AG04449 (cell line): ENCODE measurements at regions of chr3 and their contacts with region 1.

Region 1: GRCh38 chr3:187738331-187739093 is 6.8 kb downstream of the BCL6 start:
- DNase-seq: no peak
- H3K4me3 ChIP-seq: peak overlapping the region; percentile 94
- CTCF ChIP-seq: peak; percentile 76

Region 2: DNA sequence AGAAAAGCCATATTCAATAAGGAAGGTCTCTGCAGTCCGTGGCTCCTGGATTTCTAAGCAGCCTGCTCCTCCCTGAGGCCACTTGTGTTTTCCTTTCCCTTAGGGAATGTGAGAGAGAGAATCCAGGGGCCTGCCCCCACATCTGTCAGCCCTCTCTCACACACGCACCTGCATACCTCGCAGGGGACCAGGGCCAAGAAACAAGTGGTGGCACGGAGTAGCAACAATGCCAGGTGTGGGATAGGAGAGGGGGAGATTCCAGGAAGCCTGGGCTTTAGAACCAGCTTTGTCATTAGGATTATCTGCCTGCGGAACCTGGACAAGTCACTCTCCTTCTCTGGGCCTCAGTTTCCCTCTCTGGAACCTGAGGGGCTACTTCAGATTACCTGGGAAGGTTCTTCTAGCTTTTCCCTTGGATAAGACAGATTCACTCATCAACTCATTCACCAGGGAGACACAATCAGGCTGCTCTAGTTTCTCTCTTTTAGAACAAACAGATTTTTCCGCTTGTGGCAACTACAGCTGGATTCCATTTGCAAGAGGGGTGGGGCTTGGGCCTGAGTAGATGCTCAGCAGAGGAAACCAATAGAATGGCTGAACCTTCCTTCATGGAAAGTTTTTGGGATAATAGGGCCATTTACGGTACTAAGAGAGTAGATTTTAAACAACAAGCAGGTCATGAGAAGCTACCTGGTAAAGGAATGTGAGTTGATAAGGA is 12.7 kb before region 1 on chr3:
- CTCF ChIA-PET with region 1: interaction called, 11 read pairs
- POLR2A ChIA-PET with region 1: interaction called, 3 read pairs
- DNase-seq: no peak
- H3K4me3 ChIP-seq: no peak overlapping the region
- CTCF ChIP-seq: no peak

Region 3: GRCh38 chr3:188220988-188221818 is 482.7 kb after region 1 on chr3:
- CTCF ChIA-PET with region 1: interaction called, 13 read pairs
- POLR2A ChIA-PET with region 1: interaction called, 4 read pairs
- DNase-seq: no peak
- H3K4me3 ChIP-seq: no peak overlapping the region
- CTCF ChIP-seq: no peak

Region 4: GRCh38 chr3:188294823-188295487 is 556.4 kb after region 1 on chr3:
- CTCF ChIA-PET with region 1: interaction called, 16 read pairs
- POLR2A ChIA-PET with region 1: no interaction called
- DNase-seq: peak; percentile 92
- H3K4me3 ChIP-seq: no peak overlapping the region
- CTCF ChIP-seq: no peak

Region 5: DNA sequence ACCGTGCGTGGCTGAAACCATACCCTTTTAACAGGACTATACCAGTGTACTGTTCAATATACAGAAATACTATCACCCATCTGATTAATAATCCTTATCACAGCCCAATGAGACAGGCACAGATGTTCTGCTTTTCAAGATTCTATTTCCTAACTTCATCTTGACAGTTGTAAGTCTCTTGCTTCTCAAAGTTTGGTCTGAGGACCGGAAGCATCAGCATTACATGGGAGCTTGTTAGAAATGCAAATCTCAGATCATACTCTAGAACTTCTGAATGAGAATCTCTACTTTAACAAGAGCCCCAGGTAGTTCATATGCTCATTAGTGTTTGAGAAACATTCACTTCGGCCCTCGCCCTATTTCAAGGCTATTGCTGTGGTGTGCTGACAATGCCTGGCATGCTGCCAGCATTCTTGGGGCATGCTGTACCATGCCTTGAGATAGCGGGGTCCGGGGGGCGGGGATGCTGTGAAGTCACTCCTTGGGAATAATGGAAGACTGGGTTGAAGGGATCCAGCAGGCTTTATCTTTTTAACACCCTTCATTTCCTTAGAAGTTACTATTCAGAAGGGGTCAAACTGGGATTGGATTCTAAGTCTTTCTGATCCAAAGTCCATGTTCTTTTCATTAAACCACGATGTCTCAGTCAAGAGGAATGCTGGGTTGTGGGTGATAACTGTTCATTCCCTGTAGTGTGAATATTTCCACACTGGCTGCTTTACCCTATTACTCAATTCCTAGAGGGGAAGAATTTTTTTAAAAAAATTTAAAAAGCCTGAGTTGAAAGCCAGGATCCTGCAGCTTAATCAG is 610.1 kb after region 1 on chr3:
- CTCF ChIA-PET with region 1: interaction called, 20 read pairs
- POLR2A ChIA-PET with region 1: no interaction called
- DNase-seq: peak; percentile 84
- H3K4me3 ChIP-seq: no peak overlapping the region
- CTCF ChIP-seq: no peak

Region 6: GRCh38 chr3:188432802-188433520 is 694.4 kb after region 1 on chr3:
- CTCF ChIA-PET with region 1: interaction called, 13 read pairs
- POLR2A ChIA-PET with region 1: no interaction called
- DNase-seq: no peak
- H3K4me3 ChIP-seq: no peak overlapping the region
- CTCF ChIP-seq: no peak

Region 7: GRCh38 chr3:188941103-188941502 is 1202.6 kb after region 1 on chr3:
- CTCF ChIA-PET with region 1: interaction called, 12 read pairs
- POLR2A ChIA-PET with region 1: no interaction called
- DNase-seq: no peak
- H3K4me3 ChIP-seq: no peak overlapping the region
- CTCF ChIP-seq: no peak